Keratinocyte (primary cell): ENCODE measurements at regions of chr2 and their contacts with region 1.

Region 1: DNA sequence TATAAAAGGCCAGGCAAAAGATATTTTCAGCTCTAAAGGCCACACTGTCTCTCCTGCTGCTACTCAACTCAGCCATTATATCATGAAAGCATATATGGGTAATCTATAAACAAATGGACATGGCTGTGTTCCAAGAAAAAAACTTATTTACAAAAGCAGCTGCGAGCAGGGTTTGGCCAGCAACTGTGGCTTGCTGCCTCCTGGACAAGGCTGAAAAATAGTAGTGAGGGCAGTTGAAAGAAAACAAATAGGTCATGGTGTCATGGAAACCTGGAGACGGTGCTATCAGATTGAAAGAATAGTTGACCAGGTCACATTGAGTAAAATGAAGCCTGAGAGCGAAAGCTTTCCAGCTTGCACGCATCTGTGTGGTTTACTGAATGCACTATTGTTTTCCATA is 89.2 kb upstream of the LRATD1 start:
- DNase-seq: no peak
- H3K4me3 ChIP-seq: no peak overlapping the region
- H3K27ac ChIP-seq: no peak overlapping the region
- H3K4me1 ChIP-seq: no peaks in the 10 kb centered on the region
- H3K27me3 ChIP-seq: no peaks in the 10 kb centered on the region
- CTCF ChIP-seq: no peak

Region 2: GRCh38 chr2:14628901-14629300 is 85.6 kb after region 1 on chr2:
- dilution Hi-C with region 1: loop called (anchors 10 kb)
- DNase-seq: no peak
- H3K4me3 ChIP-seq: no peak overlapping the region
- H3K27ac ChIP-seq: peak overlapping the region; percentile 33
- H3K4me1 ChIP-seq: peaks cover 22% of the 10 kb centered on the region
- H3K27me3 ChIP-seq: peaks cover 10% of the 10 kb centered on the region
- CTCF ChIP-seq: no peak